ENCODE measurements at regions of chr6 and their contacts with region 1.

Region 1: DNA sequence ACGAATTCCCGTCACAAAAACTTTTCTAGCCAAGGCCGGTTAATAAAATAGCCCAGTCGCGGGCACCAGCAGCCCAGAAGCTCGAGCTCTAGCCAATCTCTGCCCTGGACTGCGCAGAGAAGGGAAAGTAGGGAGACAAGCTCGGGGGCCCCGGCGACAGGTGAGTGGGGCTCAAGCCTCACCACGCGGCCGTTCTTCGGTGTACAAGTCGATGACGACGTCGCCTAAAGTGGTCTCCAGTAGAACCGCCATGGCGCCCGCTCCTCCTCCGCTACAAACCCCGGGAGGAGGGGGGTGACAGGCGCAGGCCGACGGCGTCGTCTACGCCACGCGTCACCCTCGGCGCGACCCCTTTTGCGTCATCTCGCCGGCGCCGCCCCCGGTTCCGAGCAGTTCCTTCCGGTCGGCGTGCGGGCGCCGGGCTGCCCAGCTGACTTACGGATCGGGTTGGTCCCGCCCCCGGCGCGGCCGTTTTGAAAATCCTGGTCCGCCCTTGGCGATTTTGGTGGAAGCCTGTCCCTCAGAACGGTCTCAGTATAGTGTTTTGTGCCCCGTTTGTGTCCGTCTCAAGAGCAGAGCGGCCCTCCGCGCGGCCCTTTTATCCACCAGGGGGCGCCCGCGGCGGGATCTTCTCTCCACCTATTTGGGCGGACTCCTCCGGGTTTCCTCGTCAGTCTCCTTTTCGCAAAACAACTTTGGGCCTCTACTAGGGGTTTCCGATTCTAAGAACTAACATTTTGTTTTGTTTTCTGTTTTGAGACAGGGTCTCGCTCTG is at the start of gene PPIL4:
- DNase-seq: peak; percentile 98
- ATAC-seq: peak; percentile 88
- H3K4me3 Mint-ChIP-seq: peak within 1 kb of the TSS; percentile 95
- H3K27ac Mint-ChIP-seq: peak within 1 kb of the TSS; percentile 96
- H3K4me1 Mint-ChIP-seq: peaks cover 37% of the 10 kb centered on the region
- H3K27me3 Mint-ChIP-seq: no peaks in the 10 kb centered on the region
- CTCF ChIP-seq: peak; percentile 77
- total RNA-seq, gene PPIL4: 20.9 and 24.0 TPM in 2 replicates

Region 2: DNA sequence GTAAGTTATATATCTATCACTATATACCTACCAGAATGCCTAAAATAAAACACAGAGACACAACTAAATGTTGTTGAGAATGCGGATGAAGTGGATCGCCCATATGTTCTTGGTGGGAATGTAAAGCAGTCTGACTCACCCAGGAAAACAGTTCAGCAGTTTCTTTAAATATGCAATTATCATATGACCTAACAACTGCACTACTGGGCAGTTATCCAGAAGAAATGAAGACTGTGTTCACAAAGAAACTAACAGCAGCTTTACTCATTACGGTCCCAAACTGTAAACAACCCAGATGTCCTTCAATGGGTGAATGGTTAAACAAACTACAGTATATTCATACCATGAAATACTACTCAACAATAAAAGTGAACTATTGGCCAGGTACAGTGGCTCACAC is 46.9 kb before region 1 on chr6:
- CTCF ChIA-PET with region 1: no interaction called
- POLR2A ChIA-PET with region 1: interaction called, 3 read pairs
- intact Hi-C with region 1: loop called (anchors 1 kb)
- DNase-seq: no peak
- ATAC-seq: no peak
- H3K4me3 Mint-ChIP-seq: no peak overlapping the region
- H3K27ac Mint-ChIP-seq: peak overlapping the region; percentile 87
- H3K4me1 Mint-ChIP-seq: peaks cover 61% of the 10 kb centered on the region
- H3K27me3 Mint-ChIP-seq: no peaks in the 10 kb centered on the region
- CTCF ChIP-seq: no peak

Region 3: DNA sequence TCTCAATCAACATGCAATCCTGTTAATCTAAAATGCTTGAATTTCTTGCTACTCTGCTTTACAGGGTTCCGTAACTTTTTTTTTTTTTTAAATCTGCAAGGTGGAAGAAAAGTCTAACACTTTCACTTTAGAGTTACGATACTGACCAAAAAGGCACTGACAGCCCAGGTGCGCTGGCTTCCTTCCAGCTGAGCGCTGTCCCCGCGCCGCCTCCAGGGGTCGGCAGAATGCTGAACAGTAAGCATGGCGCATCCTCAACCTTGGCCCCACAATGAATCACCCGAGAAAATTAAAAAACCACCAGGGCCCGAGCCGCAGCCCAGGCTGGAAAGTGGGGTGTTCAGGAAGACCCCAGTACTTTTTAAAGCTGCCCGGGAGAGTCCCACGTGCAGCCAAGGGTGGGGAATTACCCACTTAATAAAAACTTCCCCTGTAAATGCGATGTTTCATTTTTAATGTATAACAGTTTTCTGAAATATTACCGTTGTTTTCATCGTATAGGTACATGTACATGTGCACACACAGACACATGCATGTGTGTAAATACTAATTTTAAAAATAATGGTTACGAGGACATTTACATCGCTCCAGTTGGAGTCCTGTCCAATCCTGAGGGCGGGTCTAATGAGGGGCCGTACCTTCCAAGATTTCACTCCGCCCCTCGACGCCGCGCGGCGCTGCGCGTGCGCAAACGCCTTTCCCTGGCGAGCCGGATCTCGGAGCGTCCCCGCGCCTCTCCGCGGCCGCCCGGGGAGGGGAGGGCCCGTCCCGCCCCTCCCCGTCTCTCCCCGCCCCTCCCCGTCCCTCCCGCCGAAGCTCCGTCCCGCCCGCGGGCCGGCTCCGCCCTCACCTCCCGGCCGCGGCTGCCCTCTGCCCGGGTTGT is 19.8 kb after region 1 on chr6 and contains the start of gene GINM1:
- CTCF ChIA-PET with region 1: interaction called, 10 read pairs
- POLR2A ChIA-PET with region 1: interaction called, 25 read pairs
- intact Hi-C with region 1: loop called (anchors 1 kb)
- DNase-seq: peak; percentile 97
- ATAC-seq: peak; percentile 85
- H3K4me3 Mint-ChIP-seq: peak within 1 kb of the TSS; percentile 93
- H3K27ac Mint-ChIP-seq: peak within 1 kb of the TSS; percentile 92
- H3K4me1 Mint-ChIP-seq: peaks cover 22% of the 10 kb centered on the region
- H3K27me3 Mint-ChIP-seq: no peaks in the 10 kb centered on the region
- CTCF ChIP-seq: no peak
- total RNA-seq, gene GINM1: 15.4 and 18.0 TPM in 2 replicates

Region 4: GRCh38 chr6:149717588-149718458 is 171.9 kb after region 1 on chr6 and contains the start of gene LATS1:
- CTCF ChIA-PET with region 1: interaction called, 3 read pairs
- POLR2A ChIA-PET with region 1: interaction called, 27 read pairs
- intact Hi-C with region 1: loop called (anchors 5 kb)
- DNase-seq: peak; percentile 90
- ATAC-seq: peak; percentile 90
- H3K4me3 Mint-ChIP-seq: peak within 1 kb of the TSS; percentile 95
- H3K27ac Mint-ChIP-seq: peak within 1 kb of the TSS; percentile 96
- H3K4me1 Mint-ChIP-seq: peaks cover 29% of the 10 kb centered on the region
- H3K27me3 Mint-ChIP-seq: no peaks in the 10 kb centered on the region
- CTCF ChIP-seq: no peak
- total RNA-seq, gene LATS1: 34.6 and 42.0 TPM in 2 replicates

Region 5: DNA sequence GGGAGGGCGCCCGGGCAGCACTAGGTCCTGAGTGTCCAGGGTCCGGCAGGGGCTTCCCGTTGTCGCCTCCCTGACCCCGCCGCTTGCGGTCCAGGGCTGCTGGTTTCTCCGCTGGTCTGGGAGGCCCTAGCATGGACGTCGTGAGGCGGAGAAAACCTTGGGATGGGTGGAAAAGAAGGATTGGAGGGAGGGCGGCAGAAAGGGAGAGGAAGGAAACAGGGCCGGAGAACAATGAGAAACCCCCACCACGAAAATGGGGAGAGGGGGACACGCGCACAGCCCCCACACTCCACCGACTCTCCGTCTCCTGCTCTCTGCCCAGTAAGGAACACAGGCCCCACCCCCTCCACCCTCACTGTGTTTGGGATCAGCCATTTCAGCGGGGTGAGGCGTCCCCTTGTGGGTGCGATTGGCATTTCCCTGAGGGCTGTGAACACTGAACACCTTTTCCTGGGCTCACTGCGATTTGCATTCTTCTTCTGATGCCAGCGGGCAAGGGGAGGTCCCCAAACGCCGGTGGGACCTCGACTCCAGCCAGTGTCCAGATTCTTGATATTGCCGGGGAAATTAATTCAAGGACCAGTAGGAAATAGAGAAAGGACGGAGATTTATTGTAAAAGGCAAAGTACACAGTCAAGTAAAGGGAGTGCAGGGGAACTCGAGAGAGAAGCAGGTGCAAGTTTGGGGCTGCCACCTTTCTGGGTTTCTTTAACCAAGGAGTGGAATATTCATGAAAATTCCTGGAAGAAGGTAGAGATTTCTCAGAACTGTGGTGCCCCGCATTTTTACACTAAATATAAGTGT is 380.2 kb after region 1 on chr6:
- CTCF ChIA-PET with region 1: interaction called, 4 read pairs
- POLR2A ChIA-PET with region 1: no interaction called
- intact Hi-C with region 1: loop called (anchors 5 kb)
- DNase-seq: no peak
- ATAC-seq: peak; percentile 58
- H3K4me3 Mint-ChIP-seq: no peak overlapping the region
- H3K27ac Mint-ChIP-seq: no peak overlapping the region
- H3K4me1 Mint-ChIP-seq: peaks cover 31% of the 10 kb centered on the region
- H3K27me3 Mint-ChIP-seq: peaks cover 87% of the 10 kb centered on the region
- CTCF ChIP-seq: no peak